ENCODE measurements at regions of chr11 and their contacts with region 1.

Region 1: DNA sequence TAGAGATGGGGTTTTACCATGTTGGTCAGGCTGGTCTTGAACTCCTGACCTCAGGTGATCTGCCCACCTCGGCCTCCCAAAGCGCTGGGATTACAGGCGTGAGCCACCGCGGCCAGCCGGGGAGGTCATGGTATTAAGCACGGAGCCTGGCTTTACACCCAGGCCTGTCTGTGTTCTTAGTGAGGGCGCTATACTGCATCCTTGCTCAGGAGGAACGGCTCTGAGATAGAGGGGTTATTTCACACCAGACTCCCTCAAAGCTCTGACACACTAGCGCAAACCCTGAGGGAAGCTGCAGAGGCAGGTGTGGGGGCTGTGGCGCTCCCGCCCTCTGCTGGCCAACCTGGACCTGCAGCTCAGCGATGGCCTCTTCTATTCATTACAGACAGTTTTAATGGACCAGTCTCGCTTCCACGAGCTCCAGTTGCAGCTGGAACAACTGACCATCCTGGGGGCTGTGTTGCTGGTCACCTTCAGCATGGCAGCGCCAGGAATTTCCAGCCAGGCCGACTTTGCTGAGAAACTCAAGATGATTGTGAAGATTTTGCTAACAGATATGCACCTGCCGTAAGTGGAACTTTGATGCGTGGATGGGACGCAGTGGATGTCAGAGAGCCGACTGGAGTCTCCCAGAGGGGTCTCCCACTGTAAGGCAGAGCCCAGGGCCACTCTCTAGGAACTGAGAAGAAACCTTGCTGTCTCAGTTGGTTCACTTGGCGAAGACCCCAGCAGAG is 26.2 kb downstream of the TCP11L1 start:
- DNase-seq: peak; percentile 36 to 86 (median 68)

Region 2: GRCh38 chr11:32960553-32961164 is 105.0 kb before region 1 on chr11:
- intact Hi-C with region 1: loop called (anchors 5 kb)
- DNase-seq: peak in 1 of 42 donors; percentile 6

Region 3: DNA sequence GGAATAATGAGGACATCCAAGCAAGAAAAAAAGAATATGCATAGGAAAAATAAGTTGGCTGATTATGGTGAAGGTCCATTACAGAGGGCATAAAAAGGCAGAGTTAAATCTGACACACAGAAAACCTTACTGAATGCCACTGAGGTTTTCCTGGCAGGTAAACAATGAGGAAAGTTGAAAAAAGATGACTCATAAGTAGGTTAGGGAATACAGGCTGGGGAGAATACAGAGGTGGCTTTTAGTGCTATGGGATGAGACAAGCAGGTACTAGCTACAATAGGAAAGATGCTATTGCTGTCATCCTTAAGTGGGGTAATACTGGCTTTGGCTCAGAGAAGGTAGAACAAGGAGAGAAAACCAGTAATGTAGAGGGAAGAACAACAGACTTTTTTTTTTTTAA is 50.9 kb after region 1 on chr11:
- intact Hi-C with region 1: no loop called
- DNase-seq: no peak

Region 4: GRCh38 chr11:33135216-33135615 is 69.6 kb after region 1 on chr11:
- intact Hi-C with region 1: no loop called
- DNase-seq: no peak